ENCODE measurements at regions of chr16 and their contacts with region 1.

Region 1: GRCh38 chr16:15694499-15694898 is 44.5 kb downstream of the NDE1 start:
- DNase-seq: no peak
- ATAC-seq: no peak
- H3K4me3 ChIP-seq: no peak overlapping the region
- H3K27ac ChIP-seq: no peak overlapping the region
- H3K4me1 ChIP-seq: no peaks in the 10 kb centered on the region
- CTCF ChIP-seq: no peak
- EP300 ChIP-seq: no peak
- POLR2A ChIP-seq: no peak
- RAD21 ChIP-seq: no peak

Region 2: DNA sequence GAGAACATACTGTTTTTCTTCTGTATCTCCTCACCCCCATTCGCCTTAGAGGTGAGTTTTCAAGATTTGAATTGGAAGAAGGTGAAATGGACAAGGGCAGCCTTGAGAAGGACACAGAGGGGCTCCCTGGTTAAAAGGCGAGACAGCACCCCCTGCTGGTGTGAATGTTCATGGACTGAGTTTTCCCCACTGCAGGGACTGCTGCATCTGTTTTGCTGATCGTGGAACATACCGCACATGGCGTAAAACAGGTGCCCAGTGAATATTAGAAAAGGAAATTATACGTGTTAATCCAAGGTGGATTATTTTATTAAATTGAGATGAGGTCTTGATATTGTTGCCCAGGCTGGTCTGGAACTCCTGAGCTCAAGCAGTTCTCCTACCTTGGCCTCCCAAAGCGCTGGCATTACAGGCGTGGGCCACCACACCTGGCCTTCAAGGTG is 10.1 kb after region 1 on chr16:
- CTCF ChIA-PET with region 1: interaction called, 45 read pairs
- POLR2A ChIA-PET with region 1: no interaction called
- DNase-seq: peak; percentile 75 to 84
- ATAC-seq: peak; percentile 87 to 95
- H3K4me3 ChIP-seq: no peak overlapping the region
- H3K27ac ChIP-seq: no peak overlapping the region
- H3K4me1 ChIP-seq: no peaks in the 10 kb centered on the region
- CTCF ChIP-seq: peak; percentile 86
- EP300 ChIP-seq: no peak
- POLR2A ChIP-seq: no peak
- RAD21 ChIP-seq: peak; percentile 84 to 87